ENCODE measurements at regions of chr1 and their contacts with region 1.

Region 1: DNA sequence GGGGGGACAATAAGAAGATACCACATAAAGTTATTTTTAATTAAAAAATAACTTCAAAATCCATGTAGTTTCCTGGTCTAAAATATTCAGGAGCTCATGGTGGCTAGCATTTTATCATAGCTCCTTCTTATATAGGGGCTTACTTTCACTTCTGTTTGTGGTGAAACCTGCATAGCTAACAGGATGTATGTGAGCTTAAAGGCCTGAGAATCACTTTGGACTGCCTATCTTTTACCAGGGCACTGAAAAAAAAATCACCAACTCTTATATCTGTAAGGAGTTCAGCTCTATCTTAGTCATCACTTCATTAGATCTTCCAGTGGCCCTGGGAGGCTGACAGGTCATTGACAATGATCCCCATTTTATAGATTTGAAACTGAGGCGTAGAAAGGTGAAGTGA is 21.3 kb downstream of the UROD start:
- DNase-seq: no peak
- H3K4me3 ChIP-seq: no peak overlapping the region
- H3K27me3 ChIP-seq: no peaks in the 10 kb centered on the region
- CTCF ChIP-seq: no peak

Region 2: DNA sequence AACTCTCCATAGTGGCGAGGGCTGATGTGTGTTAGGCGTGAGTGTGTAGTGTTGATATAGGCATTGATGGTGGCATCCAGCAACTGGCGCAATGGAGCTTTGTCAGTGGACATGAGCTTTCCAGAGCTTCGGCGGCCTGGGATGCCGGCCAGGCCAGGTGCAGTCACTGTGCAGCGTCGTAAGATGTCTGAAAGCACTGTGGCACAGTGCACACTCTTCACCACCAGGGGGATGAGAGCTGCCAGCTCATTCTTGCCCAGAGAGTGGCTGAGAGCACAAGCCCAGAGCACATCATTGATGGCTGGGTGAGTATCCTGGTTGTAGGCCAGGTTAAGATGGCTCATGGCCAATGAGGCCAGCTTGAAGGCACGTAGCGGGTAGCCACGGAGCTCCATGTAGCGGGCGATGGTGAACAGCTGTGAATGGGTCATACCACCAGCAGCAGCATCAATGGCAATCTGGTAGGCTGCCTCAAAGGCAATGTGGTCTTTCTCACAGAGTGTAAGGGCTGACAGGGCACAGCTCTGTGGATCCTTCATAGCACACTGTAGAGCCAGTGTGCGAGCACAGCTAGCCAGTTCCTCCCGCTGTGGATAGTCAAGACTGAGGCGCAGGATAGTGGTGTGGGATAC is 14.6 kb before region 1 on chr1:
- CTCF ChIA-PET with region 1: interaction called, 11 read pairs
- POLR2A ChIA-PET with region 1: no interaction called
- DNase-seq: no peak
- H3K4me3 ChIP-seq: no peak overlapping the region
- H3K27me3 ChIP-seq: no peaks in the 10 kb centered on the region
- CTCF ChIP-seq: peak; percentile 88

Region 3: GRCh38 chr1:45051005-45051772 is 17.8 kb after region 1 on chr1:
- CTCF ChIA-PET with region 1: no interaction called
- POLR2A ChIA-PET with region 1: no interaction called
- DNase-seq: no peak
- H3K4me3 ChIP-seq: no peak overlapping the region
- H3K27me3 ChIP-seq: no peaks in the 10 kb centered on the region
- CTCF ChIP-seq: no peak

Region 4: DNA sequence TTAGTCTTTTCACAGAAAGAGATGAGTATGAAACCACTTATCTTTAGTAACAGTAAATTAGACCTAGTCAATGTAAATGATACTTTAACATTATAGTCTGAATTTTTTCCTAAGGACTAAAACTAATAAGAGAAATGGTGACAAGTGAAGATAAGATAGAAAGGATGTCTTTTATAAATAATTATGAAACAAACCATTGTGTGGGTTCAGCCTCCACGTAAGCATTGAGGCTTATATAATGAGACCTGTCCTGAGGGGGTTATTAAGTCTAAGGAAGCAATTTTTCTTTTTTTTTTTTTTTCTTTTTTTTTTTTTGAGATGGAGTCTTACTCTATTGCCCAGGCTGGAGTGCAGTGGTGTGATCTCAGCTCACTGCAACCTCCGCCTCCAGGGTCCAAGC is 34.5 kb after region 1 on chr1:
- CTCF ChIA-PET with region 1: no interaction called
- POLR2A ChIA-PET with region 1: no interaction called
- DNase-seq: no peak
- H3K4me3 ChIP-seq: no peak overlapping the region
- H3K27me3 ChIP-seq: no peaks in the 10 kb centered on the region
- CTCF ChIP-seq: no peak

Measured in BJ (cell line).